H1 (cell line): ENCODE measurements at regions of chr15 and their contacts with region 1.

Region 1: GRCh38 chr15:74053941-74054529 is 28.3 kb downstream of the GOLGA6A start:
- DNase-seq: peak; percentile 21 to 86
- H3K4me3 ChIP-seq: no peak overlapping the region
- H3K27ac ChIP-seq: no peak overlapping the region
- H3K4me1 ChIP-seq: peaks cover 0 to 6% (median 0%) of the 10 kb centered on the region in 4 experiments; a peak in 2 of 7 replicates
- H3K27me3 ChIP-seq: peaks cover 0 to 6% (median 4%) of the 10 kb centered on the region in 4 experiments; a peak in 3 of 7 replicates
- CTCF ChIP-seq: peak; percentile 64 to 85 (median 77)
- EP300 ChIP-seq: no peak
- POLR2A ChIP-seq: no peak
- RAD21 ChIP-seq: peak; percentile 79 to 80

Region 2: GRCh38 chr15:73972984-73973682 is 80.9 kb before region 1 on chr15:
- CTCF ChIA-PET with region 1: interaction called, 125 read pairs
- POLR2A ChIA-PET with region 1: no interaction called
- DNase-seq: peak; percentile 54 to 92
- H3K4me3 ChIP-seq: peak overlapping the region in 1 of 4 experiments; percentile 44; a peak in 1 of 8 replicates
- H3K27ac ChIP-seq: no peak overlapping the region
- H3K4me1 ChIP-seq: peaks cover 0 to 8% (median 2%) of the 10 kb centered on the region in 4 experiments; a peak in 4 of 7 replicates
- H3K27me3 ChIP-seq: peaks cover 0 to 4% (median 2%) of the 10 kb centered on the region in 4 experiments; a peak in 3 of 7 replicates
- CTCF ChIP-seq: peak; percentile 82 to 94 (median 91)
- EP300 ChIP-seq: no peak
- POLR2A ChIP-seq: no peak
- RAD21 ChIP-seq: peak; percentile 97 to 99

Region 3: GRCh38 chr15:74036271-74037170 is 17.5 kb before region 1 on chr15:
- CTCF ChIA-PET with region 1: interaction called, 119 read pairs
- POLR2A ChIA-PET with region 1: interaction called, 6 read pairs
- DNase-seq: peak; percentile 58 to 84
- H3K4me3 ChIP-seq: no peak overlapping the region
- H3K27ac ChIP-seq: no peak overlapping the region; the same call in 1 of the 2 replicates
- H3K4me1 ChIP-seq: peaks cover 0 to 7% (median 6%) of the 10 kb centered on the region in 4 experiments; a peak in 4 of 7 replicates
- H3K27me3 ChIP-seq: no peaks in the 10 kb centered on the region
- CTCF ChIP-seq: peak; percentile 68 to 88 (median 82)
- EP300 ChIP-seq: no peak
- POLR2A ChIP-seq: no peak
- RAD21 ChIP-seq: peak; percentile 60 to 73

Region 4: GRCh38 chr15:74127260-74127953 is 73.4 kb after region 1 on chr15:
- CTCF ChIA-PET with region 1: interaction called, 19 read pairs
- POLR2A ChIA-PET with region 1: interaction called, 4 read pairs
- DNase-seq: peak; percentile 78 to 100
- H3K4me3 ChIP-seq: peak overlapping the region in 3 of 4 experiments; percentile 26 to 57 (median 36); a peak in 7 of 8 replicates
- H3K27ac ChIP-seq: no peak overlapping the region
- H3K4me1 ChIP-seq: peaks cover 2 to 55% (median 42%) of the 10 kb centered on the region in 4 experiments
- H3K27me3 ChIP-seq: peaks cover 49 to 64% (median 57%) of the 10 kb centered on the region in 4 experiments
- CTCF ChIP-seq: peak in 2 of 3 experiments; percentile 99; a peak in 3 of 4 replicates
- EP300 ChIP-seq: no peak
- POLR2A ChIP-seq: no peak
- RAD21 ChIP-seq: peak; percentile 96 to 99

Region 5: GRCh38 chr15:74202452-74203428 is 148.7 kb after region 1 on chr15 and contains the start of gene STRA6:
- CTCF ChIA-PET with region 1: interaction called, 12 read pairs
- POLR2A ChIA-PET with region 1: no interaction called
- DNase-seq: peak; percentile 90 to 93
- H3K4me3 ChIP-seq: peak within 1 kb of the TSS; percentile 26 to 60 (median 56); a peak in 7 of 8 replicates
- H3K27ac ChIP-seq: peak within 1 kb of the TSS; percentile 46; the same call in 1 of the 2 replicates
- H3K4me1 ChIP-seq: peaks cover 0 to 49% (median 33%) of the 10 kb centered on the region in 4 experiments; a peak in 6 of 7 replicates
- H3K27me3 ChIP-seq: peaks cover 0 to 7% (median 4%) of the 10 kb centered on the region in 4 experiments; a peak in 2 of 7 replicates
- CTCF ChIP-seq: peak; percentile 56 to 68 (median 60)
- EP300 ChIP-seq: peak in 1 of 2 experiments; percentile 89; a peak in 1 of 3 replicates
- POLR2A ChIP-seq: peak in 1 of 2 experiments; percentile 34; a peak in 2 of 3 replicates
- RAD21 ChIP-seq: peak; percentile 55 to 77
- total RNA-seq, gene STRA6: 7.6 and 9.3 TPM in 2 replicates

Region 6: GRCh38 chr15:74315626-74316025 is 261.6 kb after region 1 on chr15:
- CTCF ChIA-PET with region 1: interaction called, 96 read pairs
- POLR2A ChIA-PET with region 1: interaction called, 5 read pairs
- DNase-seq: no peak
- H3K4me3 ChIP-seq: no peak overlapping the region
- H3K27ac ChIP-seq: no peak overlapping the region
- H3K4me1 ChIP-seq: peaks cover 3 to 45% (median 31%) of the 10 kb centered on the region in 4 experiments
- H3K27me3 ChIP-seq: peaks cover 0 to 3% (median under 1%) of the 10 kb centered on the region in 4 experiments; a peak in 2 of 7 replicates
- CTCF ChIP-seq: no peak
- EP300 ChIP-seq: no peak
- POLR2A ChIP-seq: no peak
- RAD21 ChIP-seq: no peak